ENCODE measurements at regions of chr6 and their contacts with region 1.

Region 1: GRCh38 chr6:6547110-6547879 is 41.2 kb upstream of the LY86 start:
- DNase-seq: peak; percentile 75 to 88
- H3K4me3 ChIP-seq: peak overlapping the region; percentile 31
- H3K4me3 Mint-ChIP-seq: peak overlapping the region; percentile 59
- H3K27ac Mint-ChIP-seq: no peak overlapping the region
- H3K4me1 ChIP-seq: peaks cover 9% of the 10 kb centered on the region
- H3K4me1 Mint-ChIP-seq: no peaks in the 10 kb centered on the region
- H3K27me3 ChIP-seq: peaks cover 2% of the 10 kb centered on the region
- H3K27me3 Mint-ChIP-seq: peaks cover 30% of the 10 kb centered on the region
- CTCF ChIP-seq: peak; percentile 84 to 91

Region 2: GRCh38 chr6:5950361-5950785 is 596.9 kb before region 1 on chr6:
- CTCF ChIA-PET with region 1: no interaction called
- POLR2A ChIA-PET with region 1: no interaction called
- intact Hi-C with region 1: loop called (anchors 10 kb)
- DNase-seq: peak in 1 of 2 experiments; percentile 23
- H3K4me3 ChIP-seq: no peak overlapping the region
- H3K4me3 Mint-ChIP-seq: no peak overlapping the region
- H3K27ac Mint-ChIP-seq: no peak overlapping the region
- H3K4me1 ChIP-seq: no peaks in the 10 kb centered on the region
- H3K4me1 Mint-ChIP-seq: no peaks in the 10 kb centered on the region
- H3K27me3 ChIP-seq: no peaks in the 10 kb centered on the region
- H3K27me3 Mint-ChIP-seq: peaks cover 12% of the 10 kb centered on the region
- CTCF ChIP-seq: peak in 1 of 2 experiments; percentile 54

Region 3: DNA sequence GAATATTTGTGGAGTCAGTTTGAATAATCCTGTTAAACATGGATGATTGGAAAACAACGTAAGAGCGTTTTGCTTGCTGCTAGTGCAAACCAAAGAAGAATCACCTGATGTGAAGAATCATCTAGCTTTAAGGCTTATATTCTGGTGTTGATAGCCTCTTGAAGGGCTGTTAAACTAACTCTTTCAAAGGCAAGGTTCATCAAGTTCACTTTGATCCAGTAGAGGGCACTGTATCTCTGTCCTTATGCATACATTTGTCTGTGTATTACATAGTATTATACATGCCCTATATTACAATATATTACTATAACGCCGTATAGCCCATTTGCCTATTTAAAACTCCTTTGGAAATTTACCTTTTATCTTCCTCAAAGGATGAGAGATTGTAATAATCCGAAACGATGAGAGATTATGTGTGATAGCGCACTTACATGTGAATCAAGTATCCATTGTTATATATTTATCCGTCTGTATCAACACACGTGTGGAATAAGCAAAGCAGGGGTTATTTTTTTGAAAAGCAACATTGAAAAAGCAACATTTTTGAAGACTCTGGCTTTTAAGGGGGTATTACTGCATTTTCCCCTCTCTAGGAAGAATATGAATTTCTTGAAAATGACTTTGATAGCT is 489.8 kb before region 1 on chr6:
- CTCF ChIA-PET with region 1: interaction called, 6 read pairs
- POLR2A ChIA-PET with region 1: no interaction called
- intact Hi-C with region 1: loop called (anchors 1 kb)
- DNase-seq: peak in 1 of 2 experiments; percentile 35
- H3K4me3 ChIP-seq: no peak overlapping the region
- H3K4me3 Mint-ChIP-seq: no peak overlapping the region
- H3K27ac Mint-ChIP-seq: no peak overlapping the region
- H3K4me1 ChIP-seq: no peaks in the 10 kb centered on the region
- H3K4me1 Mint-ChIP-seq: no peaks in the 10 kb centered on the region
- H3K27me3 ChIP-seq: no peaks in the 10 kb centered on the region
- H3K27me3 Mint-ChIP-seq: peaks cover 21% of the 10 kb centered on the region
- CTCF ChIP-seq: peak; percentile 42 to 56

Region 4: GRCh38 chr6:6221787-6222535 is 325.3 kb before region 1 on chr6:
- CTCF ChIA-PET with region 1: no interaction called
- POLR2A ChIA-PET with region 1: no interaction called
- intact Hi-C with region 1: loop called (anchors 2 kb)
- DNase-seq: peak in 1 of 2 experiments; percentile 39
- H3K4me3 ChIP-seq: no peak overlapping the region
- H3K4me3 Mint-ChIP-seq: no peak overlapping the region
- H3K27ac Mint-ChIP-seq: no peak overlapping the region
- H3K4me1 ChIP-seq: no peaks in the 10 kb centered on the region
- H3K4me1 Mint-ChIP-seq: no peaks in the 10 kb centered on the region
- H3K27me3 ChIP-seq: no peaks in the 10 kb centered on the region
- H3K27me3 Mint-ChIP-seq: peaks cover 3% of the 10 kb centered on the region
- CTCF ChIP-seq: peak in 1 of 2 experiments; percentile 17

Region 5: GRCh38 chr6:6315660-6316059 is 231.6 kb before region 1 on chr6:
- CTCF ChIA-PET with region 1: no interaction called
- POLR2A ChIA-PET with region 1: no interaction called
- intact Hi-C with region 1: loop called (anchors 5 kb)
- DNase-seq: peak in 1 of 2 experiments; percentile 50
- H3K4me3 ChIP-seq: no peak overlapping the region
- H3K4me3 Mint-ChIP-seq: no peak overlapping the region
- H3K27ac Mint-ChIP-seq: no peak overlapping the region
- H3K4me1 ChIP-seq: no peaks in the 10 kb centered on the region
- H3K4me1 Mint-ChIP-seq: no peaks in the 10 kb centered on the region
- H3K27me3 ChIP-seq: no peaks in the 10 kb centered on the region
- H3K27me3 Mint-ChIP-seq: peaks cover 15% of the 10 kb centered on the region
- CTCF ChIP-seq: peak; percentile 76 to 80

Region 6: DNA sequence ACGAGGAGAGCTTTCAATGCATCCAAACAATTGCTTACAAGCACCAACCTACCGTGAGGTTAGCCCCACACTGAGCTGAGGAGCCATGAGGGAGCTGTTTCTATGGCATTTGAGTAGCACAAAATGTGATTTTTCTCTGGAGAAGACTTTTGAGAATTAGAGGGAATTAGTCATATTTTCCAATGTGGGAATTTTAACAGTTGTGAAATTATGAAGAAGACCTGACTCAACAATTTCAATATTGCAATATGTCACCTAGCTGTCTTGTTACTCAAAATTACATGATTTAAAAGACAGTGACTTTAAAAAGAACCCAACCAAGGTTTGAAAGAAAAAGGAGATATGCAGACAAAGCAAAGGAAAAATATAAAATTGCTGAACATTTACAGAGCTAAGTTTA is 21.4 kb before region 1 on chr6:
- CTCF ChIA-PET with region 1: no interaction called
- POLR2A ChIA-PET with region 1: no interaction called
- intact Hi-C with region 1: no loop called
- DNase-seq: no peak
- H3K4me3 ChIP-seq: no peak overlapping the region
- H3K4me3 Mint-ChIP-seq: no peak overlapping the region
- H3K27ac Mint-ChIP-seq: no peak overlapping the region
- H3K4me1 ChIP-seq: no peaks in the 10 kb centered on the region
- H3K4me1 Mint-ChIP-seq: no peaks in the 10 kb centered on the region
- H3K27me3 ChIP-seq: no peaks in the 10 kb centered on the region
- H3K27me3 Mint-ChIP-seq: peaks cover 20% of the 10 kb centered on the region
- CTCF ChIP-seq: no peak

Measured in Caco-2 (cell line).